ENCODE measurements at regions of chr5 and their contacts with region 1.

Region 1: DNA sequence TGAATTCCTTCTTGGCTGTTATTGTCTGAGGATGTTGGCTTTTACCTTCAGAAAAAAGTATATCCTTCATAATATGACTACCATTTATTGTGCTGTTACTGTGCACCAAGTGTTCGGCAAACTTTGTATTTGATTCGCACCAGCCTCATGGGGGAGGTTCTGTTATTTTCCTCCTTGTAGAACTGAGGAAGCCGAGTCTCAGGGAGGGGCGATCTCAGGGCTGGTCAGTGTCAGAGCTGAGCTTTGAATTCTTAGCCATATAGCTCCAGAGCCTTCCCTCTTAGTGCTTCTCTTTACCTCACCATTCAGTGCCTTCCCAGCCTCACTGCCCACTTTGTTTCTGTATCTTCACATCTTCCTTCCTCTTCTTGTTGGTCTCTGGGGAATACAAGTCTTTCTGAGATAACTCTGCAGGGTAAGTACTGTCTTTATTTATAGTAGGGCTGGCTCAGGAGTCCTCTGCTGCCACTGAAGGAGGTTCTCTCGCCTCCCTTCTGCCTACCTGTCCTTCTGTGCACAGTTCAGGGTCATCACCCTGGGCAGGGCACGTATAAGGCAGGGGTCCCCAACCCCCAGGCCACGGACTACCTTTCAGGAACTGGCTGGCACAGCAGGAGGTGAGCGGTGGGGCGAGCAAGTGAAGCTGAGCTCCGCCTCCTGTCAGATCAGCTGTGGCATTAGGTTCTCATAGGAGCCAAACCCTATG is 48.4 kb downstream of the GALNT10 start:
- DNase-seq: peak; percentile 63
- ATAC-seq: peak; percentile 76
- H3K4me3 ChIP-seq: no peak overlapping the region
- H3K27ac ChIP-seq: peak overlapping the region; percentile 57
- H3K4me1 ChIP-seq: peaks cover 59% of the 10 kb centered on the region
- H3K27me3 ChIP-seq: no peaks in the 10 kb centered on the region
- CTCF ChIP-seq: no peak
- EP300 ChIP-seq: no peak
- POLR2A ChIP-seq: no peak
- RAD21 ChIP-seq: no peak

Region 2: DNA sequence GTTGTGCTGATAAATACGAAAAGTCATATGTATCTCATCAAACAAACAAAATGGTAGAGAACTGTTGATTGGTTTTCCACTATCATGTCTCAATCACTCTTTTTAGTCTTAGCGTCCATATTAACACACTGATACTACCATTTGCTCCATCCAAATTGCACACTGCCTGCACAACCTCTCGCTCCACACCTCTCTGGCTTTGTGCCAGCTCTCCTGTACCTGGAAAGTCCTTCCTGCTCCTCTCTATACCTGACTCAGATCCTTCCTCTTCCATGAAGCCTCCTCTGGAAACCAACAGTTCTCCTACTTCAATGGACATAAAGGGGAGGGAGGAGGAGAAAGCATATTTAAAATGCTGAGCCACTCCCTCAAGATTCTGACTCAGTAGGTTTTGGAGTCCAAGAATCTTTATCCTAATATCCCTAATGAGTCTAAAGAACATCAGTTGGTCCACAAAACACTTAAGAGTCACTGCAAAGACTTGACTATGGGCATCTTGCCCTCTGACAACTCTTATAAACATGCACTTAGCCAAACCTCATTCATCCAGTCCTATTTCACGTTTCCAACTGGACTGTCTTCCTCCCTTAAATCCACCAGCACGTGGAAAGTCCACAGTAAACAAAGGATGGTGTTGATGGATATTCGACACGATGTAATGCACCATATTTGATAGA is 372.9 kb before region 1 on chr5:
- CTCF ChIA-PET with region 1: no interaction called
- POLR2A ChIA-PET with region 1: no interaction called
- RAD21 ChIA-PET with region 1: no interaction called
- SMC1A ChIA-PET with region 1: no interaction called
- in situ Hi-C with region 1: no loop called
- intact Hi-C with region 1: no loop called
- DNase-seq: no peak
- ATAC-seq: no peak
- H3K4me3 ChIP-seq: no peak overlapping the region
- H3K27ac ChIP-seq: no peak overlapping the region
- H3K4me1 ChIP-seq: no peaks in the 10 kb centered on the region
- H3K27me3 ChIP-seq: no peaks in the 10 kb centered on the region; a peak in 1 of 4 replicates
- CTCF ChIP-seq: no peak
- EP300 ChIP-seq: no peak
- POLR2A ChIP-seq: no peak
- RAD21 ChIP-seq: no peak

Region 3: DNA sequence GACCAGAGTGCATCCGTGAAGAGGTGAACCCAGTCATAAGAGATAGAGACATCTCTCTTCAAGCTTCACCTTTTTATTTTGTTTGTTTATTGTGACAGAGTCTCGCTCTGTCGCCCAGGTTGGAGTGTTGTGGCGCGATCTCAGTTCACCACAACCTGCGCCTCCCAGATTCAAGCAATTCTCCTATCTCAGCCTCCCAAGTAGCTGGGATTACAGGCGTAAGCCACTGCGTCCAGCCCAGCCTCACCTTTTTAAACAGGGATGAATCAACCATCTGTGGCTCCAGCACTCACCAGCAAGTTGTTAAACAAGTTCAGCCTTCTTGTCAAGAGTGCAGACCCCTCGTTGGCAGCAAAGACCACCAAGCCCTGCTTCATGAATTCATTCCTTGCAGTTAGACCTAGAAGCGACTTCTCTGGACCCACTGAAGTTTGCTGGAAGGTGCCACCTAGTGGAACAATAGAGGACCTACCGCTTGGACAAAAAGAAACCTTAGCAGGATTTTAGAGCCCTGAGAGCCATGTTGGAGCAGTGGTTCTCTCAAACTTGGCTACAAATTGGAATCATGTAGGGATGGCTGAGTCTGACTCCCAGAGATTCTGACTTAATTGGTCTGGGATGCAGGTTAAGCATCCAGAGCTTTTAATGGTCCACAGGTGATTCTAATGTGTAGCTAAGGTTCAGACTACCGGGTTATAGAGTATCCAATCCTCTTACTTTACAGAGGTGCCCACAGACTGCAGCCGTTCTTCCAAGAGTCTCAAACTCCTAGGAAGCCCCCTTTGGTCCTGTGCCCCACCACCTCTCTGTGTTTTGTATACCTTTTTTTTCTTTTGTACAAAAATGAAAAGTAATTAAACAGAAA is 58.9 kb before region 1 on chr5:
- CTCF ChIA-PET with region 1: interaction called, 31 read pairs
- POLR2A ChIA-PET with region 1: no interaction called
- RAD21 ChIA-PET with region 1: interaction called, 11 read pairs
- SMC1A ChIA-PET with region 1: interaction called, 13 read pairs
- in situ Hi-C with region 1: no loop called
- intact Hi-C with region 1: no loop called
- DNase-seq: no peak
- ATAC-seq: peak; percentile 99
- H3K4me3 ChIP-seq: no peak overlapping the region
- H3K27ac ChIP-seq: no peak overlapping the region
- H3K4me1 ChIP-seq: no peaks in the 10 kb centered on the region
- H3K27me3 ChIP-seq: no peaks in the 10 kb centered on the region
- CTCF ChIP-seq: peak; percentile 74 to 84 (median 80)
- EP300 ChIP-seq: no peak
- POLR2A ChIP-seq: no peak
- RAD21 ChIP-seq: peak; percentile 89

Region 4: GRCh38 chr5:154196955-154197652 is 41.8 kb before region 1 on chr5:
- CTCF ChIA-PET with region 1: interaction called, 52 read pairs
- POLR2A ChIA-PET with region 1: interaction called, 3 read pairs
- RAD21 ChIA-PET with region 1: interaction called, 18 read pairs
- SMC1A ChIA-PET with region 1: interaction called, 97 read pairs
- in situ Hi-C with region 1: no loop called
- intact Hi-C with region 1: no loop called
- DNase-seq: no peak
- ATAC-seq: peak; percentile 35
- H3K4me3 ChIP-seq: no peak overlapping the region
- H3K27ac ChIP-seq: no peak overlapping the region
- H3K4me1 ChIP-seq: peaks cover 32% of the 10 kb centered on the region
- H3K27me3 ChIP-seq: no peaks in the 10 kb centered on the region
- CTCF ChIP-seq: peak in 2 of 3 experiments; percentile 8 to 35; a peak in 3 of 6 replicates
- EP300 ChIP-seq: no peak
- POLR2A ChIP-seq: no peak
- RAD21 ChIP-seq: peak; percentile 28; the same call in 1 of the 2 replicates

Region 5: GRCh38 chr5:154202379-154203260 is 36.3 kb before region 1 on chr5:
- CTCF ChIA-PET with region 1: interaction called, 50 read pairs
- POLR2A ChIA-PET with region 1: interaction called, 3 read pairs
- RAD21 ChIA-PET with region 1: interaction called, 14 read pairs
- SMC1A ChIA-PET with region 1: interaction called, 50 read pairs
- in situ Hi-C with region 1: no loop called
- intact Hi-C with region 1: no loop called
- DNase-seq: no peak
- ATAC-seq: peak; percentile 91
- H3K4me3 ChIP-seq: peak overlapping the region; percentile 66
- H3K27ac ChIP-seq: peak overlapping the region; percentile 86
- H3K4me1 ChIP-seq: peaks cover 39% of the 10 kb centered on the region
- H3K27me3 ChIP-seq: no peaks in the 10 kb centered on the region
- CTCF ChIP-seq: no peak
- EP300 ChIP-seq: no peak
- POLR2A ChIP-seq: peak; percentile 57
- RAD21 ChIP-seq: no peak

Region 6: DNA sequence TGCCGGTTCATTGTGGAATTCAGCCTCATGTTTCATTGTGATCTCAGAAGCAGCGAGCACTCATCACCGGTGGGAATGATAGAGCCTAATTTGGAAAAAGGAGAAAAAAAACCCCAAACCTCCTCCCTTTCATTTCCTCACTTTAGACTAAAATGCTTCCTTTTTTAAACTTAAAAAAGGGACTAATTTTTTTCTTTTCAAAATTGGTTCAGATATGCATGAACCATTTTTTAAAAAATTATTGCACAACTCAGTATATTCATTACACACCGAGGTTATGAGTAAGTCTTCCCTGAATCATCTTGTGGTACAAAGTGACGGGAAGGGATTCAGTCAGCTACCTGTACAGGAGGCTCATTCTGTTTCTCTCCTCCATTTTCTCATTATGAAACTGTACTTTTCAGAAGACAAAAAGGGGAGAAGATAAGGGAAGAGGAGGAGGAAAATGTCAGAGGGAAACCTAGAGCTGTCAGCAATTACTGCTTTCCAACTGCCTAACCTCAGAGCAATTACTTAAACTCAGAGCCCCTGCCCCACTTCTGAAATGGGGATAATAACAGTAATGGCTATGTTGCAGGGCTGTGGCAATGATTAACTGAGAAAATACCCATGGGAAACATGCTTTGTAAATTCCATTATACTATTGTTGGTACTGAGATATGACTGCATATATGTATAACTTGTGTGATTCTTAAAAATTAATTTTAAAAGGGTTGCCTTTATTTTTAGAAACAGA is 24.4 kb before region 1 on chr5:
- CTCF ChIA-PET with region 1: interaction called, 13 read pairs
- POLR2A ChIA-PET with region 1: interaction called, 5 read pairs
- RAD21 ChIA-PET with region 1: interaction called, 6 read pairs
- SMC1A ChIA-PET with region 1: interaction called, 13 read pairs
- in situ Hi-C with region 1: no loop called
- intact Hi-C with region 1: no loop called
- DNase-seq: no peak
- ATAC-seq: peak; percentile 85
- H3K4me3 ChIP-seq: 0 out of 2 replicates have a peak overlapping the region, but pooled peaks have one; percentile 3
- H3K27ac ChIP-seq: peak overlapping the region; percentile 37
- H3K4me1 ChIP-seq: peaks cover 10% of the 10 kb centered on the region
- H3K27me3 ChIP-seq: no peaks in the 10 kb centered on the region
- CTCF ChIP-seq: no peak
- EP300 ChIP-seq: peak in 1 of 2 experiments; percentile 27; a peak in 1 of 4 replicates
- POLR2A ChIP-seq: no peak
- RAD21 ChIP-seq: no peak

Region 7: DNA sequence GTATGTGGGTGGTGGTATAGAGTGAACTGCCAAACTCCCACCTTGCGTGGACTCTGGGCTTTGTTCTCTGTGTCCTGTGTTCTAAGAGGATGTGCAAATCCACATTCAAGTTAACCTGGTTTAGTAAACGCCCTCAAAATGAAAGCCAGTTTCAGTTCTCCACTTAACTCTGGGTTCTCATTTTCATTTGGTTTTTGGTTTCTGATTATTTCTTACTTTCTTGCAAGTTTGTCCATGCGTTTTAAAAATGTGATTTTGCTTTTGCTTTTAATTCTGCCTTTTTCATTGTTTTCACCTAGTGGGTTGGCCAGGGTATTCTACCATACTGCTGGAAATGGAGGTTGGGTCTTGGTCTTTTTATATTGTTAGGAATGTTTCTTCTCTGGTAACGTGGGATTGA is 10.2 kb before region 1 on chr5:
- CTCF ChIA-PET with region 1: interaction called, 18 read pairs
- POLR2A ChIA-PET with region 1: interaction called, 4 read pairs
- RAD21 ChIA-PET with region 1: interaction called, 8 read pairs
- SMC1A ChIA-PET with region 1: interaction called, 12 read pairs
- in situ Hi-C with region 1: no loop called
- intact Hi-C with region 1: no loop called
- DNase-seq: peak; percentile 72
- ATAC-seq: peak; percentile 98
- H3K4me3 ChIP-seq: peak overlapping the region; percentile 50; the same call in 1 of the 2 replicates
- H3K27ac ChIP-seq: peak overlapping the region; percentile 75
- H3K4me1 ChIP-seq: peaks cover 23% of the 10 kb centered on the region
- H3K27me3 ChIP-seq: no peaks in the 10 kb centered on the region
- CTCF ChIP-seq: no peak
- EP300 ChIP-seq: peak; percentile 22 to 62; a peak in 2 of 4 replicates
- POLR2A ChIP-seq: no peak
- RAD21 ChIP-seq: no peak

Region 8: GRCh38 chr5:154384480-154385235 is 145.7 kb after region 1 on chr5:
- CTCF ChIA-PET with region 1: interaction called, 5 read pairs
- POLR2A ChIA-PET with region 1: no interaction called
- RAD21 ChIA-PET with region 1: interaction called, 13 read pairs
- SMC1A ChIA-PET with region 1: interaction called, 24 read pairs
- in situ Hi-C with region 1: no loop called
- intact Hi-C with region 1: loop called (anchors 5 kb)
- DNase-seq: peak; percentile 99
- ATAC-seq: peak; percentile 97
- H3K4me3 ChIP-seq: no peak overlapping the region
- H3K27ac ChIP-seq: peak overlapping the region; percentile 95
- H3K4me1 ChIP-seq: peaks cover 16% of the 10 kb centered on the region
- H3K27me3 ChIP-seq: no peaks in the 10 kb centered on the region
- CTCF ChIP-seq: no peak
- EP300 ChIP-seq: peak; percentile 83 to 90
- POLR2A ChIP-seq: no peak
- RAD21 ChIP-seq: peak; percentile 23; the same call in 1 of the 2 replicates

Region 9: DNA sequence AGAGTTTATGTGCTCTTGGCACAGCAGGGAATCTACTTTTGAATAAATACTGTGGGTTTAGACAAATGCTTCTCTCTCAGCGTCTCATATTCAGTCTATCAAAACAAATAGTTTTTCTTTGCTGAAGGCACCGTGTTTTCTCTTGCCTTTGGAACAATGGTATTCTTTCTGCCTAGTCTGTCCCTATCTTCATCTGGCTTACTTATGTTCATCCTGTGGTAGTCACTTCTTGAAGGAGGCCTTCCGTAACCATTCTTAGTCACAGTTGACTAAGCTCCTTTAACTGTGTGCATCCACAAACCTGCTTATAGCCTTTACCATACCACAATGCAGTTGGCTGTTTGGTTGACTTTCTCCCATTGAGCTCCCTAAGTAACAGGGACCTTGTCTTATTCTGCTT is 562.2 kb after region 1 on chr5:
- CTCF ChIA-PET with region 1: no interaction called
- POLR2A ChIA-PET with region 1: no interaction called
- RAD21 ChIA-PET with region 1: no interaction called
- SMC1A ChIA-PET with region 1: no interaction called
- in situ Hi-C with region 1: no loop called
- intact Hi-C with region 1: no loop called
- DNase-seq: no peak
- ATAC-seq: no peak
- H3K4me3 ChIP-seq: no peak overlapping the region
- H3K27ac ChIP-seq: no peak overlapping the region
- H3K4me1 ChIP-seq: no peaks in the 10 kb centered on the region
- H3K27me3 ChIP-seq: no peaks in the 10 kb centered on the region
- CTCF ChIP-seq: no peak
- EP300 ChIP-seq: no peak
- POLR2A ChIP-seq: no peak
- RAD21 ChIP-seq: no peak

Measured in GM12878 (cell line).